Heart left ventricle (tissue), 16 donors: ENCODE measurements at regions of chr5 and their contacts with region 1.

Region 1: GRCh38 chr5:147935032-147935431 is 28.7 kb upstream of the C5orf46 start:
- DNase-seq: no peak
- ATAC-seq: peak; percentile 10 to 80 (median 77)
- H3K4me3 ChIP-seq: no peak overlapping the region
- H3K27ac ChIP-seq: no peak overlapping the region
- H3K4me1 ChIP-seq: no peaks in the 10 kb centered on the region
- H3K27me3 ChIP-seq: peaks cover 0 to 4% (median 0%) of the 10 kb centered on the region in 9 donors
- CTCF ChIP-seq: peak in 11 of 12 donors; percentile 34 to 65 (median 52)
- POLR2A ChIP-seq: no peak

Region 2: DNA sequence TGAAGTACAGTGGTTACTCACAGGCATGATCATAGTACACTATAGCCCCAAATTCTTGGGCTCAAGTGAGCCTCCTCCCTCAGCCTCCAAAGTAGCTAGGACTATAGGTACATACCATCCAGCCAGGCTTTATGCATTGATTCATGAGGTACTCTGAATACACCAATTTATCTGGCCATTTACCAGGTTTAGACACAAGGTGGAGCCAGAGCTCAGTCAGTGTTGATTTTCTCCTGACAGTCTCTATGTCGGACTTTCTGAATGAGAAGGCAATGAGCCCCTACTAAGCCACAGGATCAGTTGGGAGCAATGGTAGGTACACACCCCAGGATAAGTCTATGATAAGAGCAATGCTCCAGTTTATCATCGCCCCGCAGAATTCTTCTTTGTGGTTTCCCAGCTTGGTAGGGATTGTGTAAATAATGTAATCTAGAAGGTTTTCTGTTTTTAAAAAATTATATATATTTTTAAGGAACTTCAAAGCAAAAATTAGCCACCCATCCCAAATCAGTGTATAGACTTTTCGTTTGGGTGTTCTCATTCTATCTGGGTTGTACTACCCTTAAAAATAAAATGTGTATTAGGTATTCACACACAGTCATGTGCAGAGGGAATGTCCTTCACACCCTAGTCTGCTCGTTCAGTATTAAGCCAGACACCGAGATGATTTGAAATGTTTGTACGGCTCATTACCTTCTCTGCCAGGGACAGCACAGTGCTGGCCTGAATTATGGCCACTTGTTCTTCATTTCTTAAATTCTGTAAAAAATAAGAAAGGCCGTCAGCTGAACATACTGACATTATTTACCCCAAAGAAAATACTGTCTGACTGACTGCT is 306.8 kb before region 1 on chr5:
- intact Hi-C with region 1: loop called in 3 of 10 experiments (anchors 5 to 10 kb)
- DNase-seq: peak in 3 of 5 donors; percentile 31 to 38 (median 37)
- ATAC-seq: peak in 3 of 4 donors; percentile 70 to 82 (median 71)
- H3K4me3 ChIP-seq: no peak overlapping the region
- H3K27ac ChIP-seq: no peak overlapping the region
- H3K4me1 ChIP-seq: no peaks in the 10 kb centered on the region
- H3K27me3 ChIP-seq: peaks cover 0 to 3% (median 0%) of the 10 kb centered on the region in 9 donors
- CTCF ChIP-seq: peak; percentile 61 to 82 (median 68)
- POLR2A ChIP-seq: no peak

Region 3: DNA sequence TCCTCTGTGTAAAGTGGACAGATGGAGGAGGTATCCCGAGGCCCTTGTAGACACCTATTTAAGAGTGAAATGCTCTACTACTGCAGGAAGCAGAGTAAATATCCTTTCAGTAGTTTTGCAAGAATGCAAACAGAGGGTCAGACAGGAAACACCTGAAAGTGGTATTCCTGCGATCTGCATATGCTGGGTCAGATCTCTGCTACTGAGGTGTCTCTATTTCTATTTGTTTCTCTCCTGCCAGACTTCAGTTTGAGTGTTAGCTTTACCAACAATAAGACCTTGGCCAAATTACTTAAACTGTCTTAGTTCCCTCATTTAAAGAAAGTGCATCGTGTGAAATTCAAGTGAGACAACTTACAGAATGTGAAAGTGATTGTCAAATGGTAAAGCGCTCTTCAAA is 200.1 kb before region 1 on chr5:
- intact Hi-C with region 1: no loop called
- DNase-seq: no peak
- ATAC-seq: no peak
- H3K4me3 ChIP-seq: no peak overlapping the region
- H3K27ac ChIP-seq: no peak overlapping the region
- H3K4me1 ChIP-seq: no peaks in the 10 kb centered on the region
- H3K27me3 ChIP-seq: no peaks in the 10 kb centered on the region
- CTCF ChIP-seq: no peak
- POLR2A ChIP-seq: no peak

Region 4: GRCh38 chr5:147887024-147887627 is 47.9 kb before region 1 on chr5:
- intact Hi-C with region 1: loop called (anchors 1 to 10 kb)
- DNase-seq: no peak
- ATAC-seq: no peak
- H3K4me3 ChIP-seq: no peak overlapping the region
- H3K27ac ChIP-seq: no peak overlapping the region
- H3K4me1 ChIP-seq: peaks cover 0 to 15% (median 0%) of the 10 kb centered on the region in 12 donors
- H3K27me3 ChIP-seq: no peaks in the 10 kb centered on the region
- CTCF ChIP-seq: peak; percentile 22 to 65 (median 50)
- POLR2A ChIP-seq: no peak